Caco-2 (cell line): ENCODE measurements at regions of chr13 and their contacts with region 1.

Region 1: GRCh38 chr13:70363991-70364390 is 255.7 kb upstream of the KLHL1 start:
- DNase-seq: no peak
- H3K4me3 ChIP-seq: no peak overlapping the region
- H3K4me3 Mint-ChIP-seq: no peak overlapping the region
- H3K27ac Mint-ChIP-seq: no peak overlapping the region
- H3K4me1 ChIP-seq: no peaks in the 10 kb centered on the region
- H3K4me1 Mint-ChIP-seq: no peaks in the 10 kb centered on the region
- H3K27me3 ChIP-seq: no peaks in the 10 kb centered on the region
- H3K27me3 Mint-ChIP-seq: no peaks in the 10 kb centered on the region
- CTCF ChIP-seq: no peak

Region 2: GRCh38 chr13:70380809-70381208 is 16.8 kb after region 1 on chr13:
- CTCF ChIA-PET with region 1: no interaction called
- POLR2A ChIA-PET with region 1: no interaction called
- intact Hi-C with region 1: no loop called
- DNase-seq: no peak
- H3K4me3 ChIP-seq: no peak overlapping the region
- H3K4me3 Mint-ChIP-seq: no peak overlapping the region
- H3K27ac Mint-ChIP-seq: no peak overlapping the region
- H3K4me1 ChIP-seq: peaks cover 18% of the 10 kb centered on the region; the same call in 1 of the 2 replicates
- H3K4me1 Mint-ChIP-seq: peaks cover 1% of the 10 kb centered on the region
- H3K27me3 ChIP-seq: no peaks in the 10 kb centered on the region
- H3K27me3 Mint-ChIP-seq: no peaks in the 10 kb centered on the region
- CTCF ChIP-seq: no peak

Region 3: GRCh38 chr13:70391678-70392077 is 27.7 kb after region 1 on chr13:
- CTCF ChIA-PET with region 1: no interaction called
- POLR2A ChIA-PET with region 1: no interaction called
- intact Hi-C with region 1: loop called (anchors 2 kb)
- DNase-seq: peak; percentile 87 to 93
- H3K4me3 ChIP-seq: no peak overlapping the region
- H3K4me3 Mint-ChIP-seq: peak overlapping the region; percentile 2
- H3K27ac Mint-ChIP-seq: peak overlapping the region; percentile 17
- H3K4me1 ChIP-seq: peaks cover 52% of the 10 kb centered on the region
- H3K4me1 Mint-ChIP-seq: peaks cover 38% of the 10 kb centered on the region
- H3K27me3 ChIP-seq: no peaks in the 10 kb centered on the region
- H3K27me3 Mint-ChIP-seq: no peaks in the 10 kb centered on the region
- CTCF ChIP-seq: no peak